PC-9 (cell line): ENCODE measurements at regions of chr5 and their contacts with region 1.

Region 1: GRCh38 chr5:62587737-62588136 is 9.1 kb downstream of the LRRC70 start:
- DNase-seq: no peak
- H3K4me3 ChIP-seq: no peak overlapping the region
- H3K27ac ChIP-seq: no peak overlapping the region
- H3K4me1 ChIP-seq: 0 out of 2 replicates have a peak, but pooled peaks cover 9% of the 10 kb centered on the region
- H3K27me3 ChIP-seq: no peaks in the 10 kb centered on the region
- CTCF ChIP-seq: no peak

Region 2: DNA sequence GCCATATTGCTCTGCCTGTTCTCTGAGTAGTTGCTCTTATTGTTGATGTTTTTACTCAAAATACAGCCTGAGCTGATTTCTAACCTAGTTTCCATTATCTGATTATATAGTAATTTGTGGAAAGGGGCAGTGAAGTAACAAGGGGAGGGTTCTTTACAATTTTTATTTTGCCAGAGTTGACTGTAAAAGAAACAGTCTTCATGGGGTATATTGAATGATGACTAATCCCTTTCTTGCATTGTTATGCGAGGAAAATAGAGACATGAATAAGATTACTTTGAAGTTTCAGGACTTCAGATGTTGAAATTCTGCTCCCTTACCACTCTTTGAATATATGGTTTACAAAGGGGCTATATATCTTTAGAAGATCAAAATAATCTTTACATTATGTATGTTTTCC is 18.3 kb before region 1 on chr5:
- CTCF ChIA-PET with region 1: no interaction called
- POLR2A ChIA-PET with region 1: interaction called, 10 read pairs
- intact Hi-C with region 1: no loop called
- DNase-seq: no peak
- H3K4me3 ChIP-seq: no peak overlapping the region
- H3K27ac ChIP-seq: no peak overlapping the region
- H3K4me1 ChIP-seq: no peaks in the 10 kb centered on the region
- H3K27me3 ChIP-seq: no peaks in the 10 kb centered on the region
- CTCF ChIP-seq: no peak